Psoas muscle (tissue), 8 donors: ENCODE measurements at regions of chr1 and their contacts with region 1.

Region 1: GRCh38 chr1:180863158-180863775 is 49.4 kb upstream of the KIAA1614 start:
- DNase-seq: no peak
- ATAC-seq: peak in 2 of 4 donors; percentile 46 to 70
- H3K4me3 ChIP-seq: no peak overlapping the region
- H3K27ac ChIP-seq: no peak overlapping the region
- H3K4me1 ChIP-seq: peaks cover 4% of the 10 kb centered on the region
- H3K27me3 ChIP-seq: no peaks in the 10 kb centered on the region
- CTCF ChIP-seq: peak; percentile 83

Region 2: GRCh38 chr1:180515864-180516388 is 347.3 kb before region 1 on chr1:
- intact Hi-C with region 1: loop called (anchors 5 kb)
- DNase-seq: peak; percentile 27 to 61
- ATAC-seq: peak; percentile 91 to 99 (median 98)
- H3K4me3 ChIP-seq: no peak overlapping the region
- H3K27ac ChIP-seq: no peak overlapping the region
- H3K4me1 ChIP-seq: peaks cover 5% of the 10 kb centered on the region
- H3K27me3 ChIP-seq: no peaks in the 10 kb centered on the region
- CTCF ChIP-seq: peak; percentile 88

Region 3: DNA sequence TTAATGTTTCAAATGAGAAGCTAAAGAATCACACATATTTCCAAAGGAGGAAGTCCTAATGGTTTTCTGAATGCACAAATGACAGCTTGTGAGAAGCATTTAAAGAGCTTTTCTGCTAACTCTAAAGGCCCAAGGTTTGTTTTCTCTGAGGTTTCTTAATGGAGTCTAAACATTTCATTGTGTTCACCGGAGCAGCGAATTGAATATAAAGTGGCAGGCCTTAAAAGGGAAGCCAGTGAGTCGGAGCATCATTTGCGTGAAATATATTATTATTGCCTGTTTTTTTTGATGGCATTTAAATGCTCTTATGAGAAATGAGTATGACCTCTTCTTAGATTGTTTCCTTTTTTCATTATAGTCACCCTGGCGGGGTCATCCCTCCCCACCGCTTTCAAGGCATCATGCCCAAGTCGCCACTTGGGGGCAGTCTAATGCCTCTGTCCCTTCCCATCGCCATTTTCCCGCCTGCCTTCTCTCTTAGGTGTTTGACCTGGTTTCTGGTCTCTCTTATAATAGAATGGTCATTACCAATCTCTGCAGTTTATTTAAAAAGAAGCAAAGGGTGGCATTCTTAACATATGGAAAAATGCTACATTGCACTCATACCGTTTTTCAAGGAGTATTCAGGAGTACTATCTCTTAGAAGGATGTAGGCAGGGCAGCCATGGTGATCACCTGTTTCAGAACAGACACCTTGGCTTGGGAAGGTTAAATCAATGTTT is 329.8 kb before region 1 on chr1:
- intact Hi-C with region 1: loop called (anchors 5 kb)
- DNase-seq: peak; percentile 62 to 72
- ATAC-seq: peak in 3 of 4 donors; percentile 78 to 88 (median 79)
- H3K4me3 ChIP-seq: no peak overlapping the region
- H3K27ac ChIP-seq: no peak overlapping the region
- H3K4me1 ChIP-seq: no peaks in the 10 kb centered on the region
- H3K27me3 ChIP-seq: peaks cover 0 to 2% (median 0%) of the 10 kb centered on the region in 3 donors
- CTCF ChIP-seq: peak; percentile 75

Region 4: GRCh38 chr1:180631766-180632325 is 231.4 kb before region 1 on chr1 and contains the start of gene XPR1:
- intact Hi-C with region 1: loop called (anchors 5 to 10 kb)
- DNase-seq: peak; percentile 98
- ATAC-seq: peak; percentile 98 to 100 (median 100)
- H3K4me3 ChIP-seq: peak within 1 kb of the TSS; percentile 98
- H3K27ac ChIP-seq: peak within 1 kb of the TSS; percentile 89
- H3K4me1 ChIP-seq: peaks cover 41% of the 10 kb centered on the region
- H3K27me3 ChIP-seq: no peaks in the 10 kb centered on the region
- CTCF ChIP-seq: peak; percentile 45
- total RNA-seq, gene XPR1: 10.9 to 19.1 (median 13.2) TPM